ENCODE measurements at regions of chr3 and their contacts with region 1.

Region 1: GRCh38 chr3:48465531-48466378 is 19.2 kb downstream of the ATRIP start:
- H3K4me3 Mint-ChIP-seq: peak overlapping the region; percentile 87
- H3K27ac Mint-ChIP-seq: peak overlapping the region; percentile 100
- H3K4me1 Mint-ChIP-seq: peaks cover 54% of the 10 kb centered on the region
- H3K27me3 Mint-ChIP-seq: no peaks in the 10 kb centered on the region

Region 2: DNA sequence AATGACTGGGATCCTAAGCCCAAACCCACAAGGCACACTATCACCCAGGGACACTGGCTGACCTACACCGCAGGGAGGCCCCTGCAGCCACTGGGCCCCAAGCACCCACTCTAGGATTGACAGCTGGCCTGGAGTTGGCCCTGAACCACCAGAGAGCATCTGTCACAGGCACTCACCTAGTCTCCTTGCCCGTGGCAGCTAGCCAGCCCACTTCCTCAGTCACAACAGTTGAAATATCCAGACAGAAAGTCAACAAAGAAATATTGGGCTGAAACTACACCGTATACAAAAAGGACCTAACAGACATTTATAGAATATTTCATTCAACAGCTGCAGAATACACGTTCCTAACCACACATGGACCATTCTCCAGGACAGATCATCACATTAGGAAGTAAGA is 127.1 kb before region 1 on chr3:
- intact Hi-C with region 1: no loop called
- H3K4me3 Mint-ChIP-seq: no peak overlapping the region
- H3K27ac Mint-ChIP-seq: no peak overlapping the region
- H3K4me1 Mint-ChIP-seq: peaks cover 25% of the 10 kb centered on the region
- H3K27me3 Mint-ChIP-seq: no peaks in the 10 kb centered on the region

Region 3: GRCh38 chr3:48439820-48440589 is 25.8 kb before region 1 on chr3 and contains the starts of genes CCDC51 and TMA7:
- intact Hi-C with region 1: no loop called
- H3K4me3 Mint-ChIP-seq: peak within 1 kb of the TSS; percentile 87
- H3K27ac Mint-ChIP-seq: peak within 1 kb of the TSS; percentile 86
- H3K4me1 Mint-ChIP-seq: peaks cover 10% of the 10 kb centered on the region
- H3K27me3 Mint-ChIP-seq: no peaks in the 10 kb centered on the region

Region 4: DNA sequence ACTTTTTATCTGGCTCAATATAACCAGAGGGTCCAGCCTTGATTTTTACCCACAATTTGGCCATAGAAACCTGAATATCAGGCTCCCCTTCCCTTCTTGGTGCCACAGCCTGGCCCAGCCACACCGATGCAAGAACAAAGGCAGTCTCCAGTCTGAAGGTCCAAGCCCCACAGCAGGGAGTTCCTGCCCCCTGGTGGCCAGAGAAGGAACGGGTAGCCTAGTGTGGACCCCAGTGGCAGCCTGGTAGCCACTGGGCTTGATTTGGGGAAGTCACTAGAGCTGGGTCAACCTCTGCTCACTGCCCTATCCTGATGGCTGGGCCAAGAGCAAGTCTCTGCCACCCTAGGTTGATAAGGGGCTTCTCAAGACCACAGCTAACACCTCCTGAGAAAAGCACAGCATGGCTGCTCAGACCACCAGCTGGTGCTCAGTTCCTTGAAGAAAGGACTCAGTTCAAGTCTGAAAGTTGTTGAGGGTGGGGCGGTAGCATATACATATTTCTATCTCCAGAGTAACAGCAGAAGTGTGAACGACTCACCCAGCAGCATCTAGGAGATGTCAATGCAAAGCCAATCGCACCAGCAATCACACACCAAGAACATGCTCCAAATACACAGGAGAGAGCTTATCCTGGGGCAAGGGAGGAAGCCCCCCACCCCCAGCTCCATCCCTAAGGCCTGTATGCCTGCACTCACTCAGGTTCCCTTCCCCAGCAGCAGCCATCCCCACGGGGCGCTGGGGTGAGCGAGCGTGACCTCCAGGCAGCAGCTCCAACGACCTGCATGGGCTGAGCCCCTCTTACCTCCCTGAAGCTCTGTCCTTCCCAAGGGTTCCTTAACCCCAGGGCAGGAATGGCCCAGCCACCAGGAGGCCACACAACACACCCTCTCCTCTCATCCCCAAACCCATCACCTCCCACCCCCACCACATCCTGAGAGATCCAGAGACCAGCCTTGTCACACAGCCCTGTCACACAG is 83.3 kb after region 1 on chr3:
- intact Hi-C with region 1: loop called (anchors 1 kb)
- H3K4me3 Mint-ChIP-seq: no peak overlapping the region
- H3K27ac Mint-ChIP-seq: peak overlapping the region; percentile 37
- H3K4me1 Mint-ChIP-seq: peaks cover 61% of the 10 kb centered on the region
- H3K27me3 Mint-ChIP-seq: no peaks in the 10 kb centered on the region

Region 5: DNA sequence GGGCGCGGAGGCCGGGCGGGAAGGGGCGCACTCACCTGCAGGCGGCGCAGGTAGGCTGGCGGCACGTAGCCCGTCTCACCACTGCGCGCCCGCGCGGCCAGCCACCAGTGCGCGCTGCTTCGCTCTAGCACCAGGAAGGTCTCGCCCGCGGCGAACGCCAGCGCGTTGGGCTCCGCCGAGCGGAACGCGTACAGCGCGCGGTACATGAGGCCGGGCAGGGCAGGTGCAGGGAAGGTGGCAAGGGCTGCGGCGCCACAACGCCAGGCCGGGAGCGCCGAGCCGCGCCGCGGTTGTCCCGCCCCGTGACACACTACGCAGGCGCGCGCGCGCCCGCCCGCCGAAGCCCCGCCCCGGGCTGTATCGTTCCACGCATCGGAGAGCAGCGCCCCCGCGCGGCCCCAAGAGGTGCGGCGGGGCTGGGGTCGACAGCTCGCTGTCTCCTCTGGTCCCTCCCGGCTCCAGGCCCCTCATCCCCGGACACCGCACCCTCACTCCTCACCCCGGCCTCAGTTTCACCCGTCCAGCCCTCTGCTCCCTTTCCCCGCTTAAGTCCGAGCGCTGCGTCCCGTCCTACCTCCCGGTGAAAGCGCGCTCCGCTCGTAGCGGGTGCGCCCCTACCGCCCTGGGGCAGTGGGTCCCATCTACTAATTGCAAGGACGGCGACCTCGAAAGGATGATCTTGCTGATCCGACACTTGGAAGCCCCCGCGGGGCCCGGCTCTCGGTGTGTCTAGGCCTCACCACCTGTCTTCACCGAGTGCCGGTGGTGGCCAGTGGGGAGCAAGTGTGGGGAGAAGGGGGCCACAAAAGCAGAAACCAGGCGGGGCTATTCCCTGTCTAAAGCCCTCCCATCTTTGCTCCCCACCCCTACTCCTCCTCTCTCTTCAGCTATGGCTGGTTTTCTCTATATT is 220.1 kb after region 1 on chr3 and contains the start of gene NCKIPSD:
- intact Hi-C with region 1: loop called (anchors 10 kb)
- H3K4me3 Mint-ChIP-seq: peak within 1 kb of the TSS; percentile 87
- H3K27ac Mint-ChIP-seq: peak within 1 kb of the TSS; percentile 86
- H3K4me1 Mint-ChIP-seq: peaks cover 39% of the 10 kb centered on the region
- H3K27me3 Mint-ChIP-seq: peaks cover 1% of the 10 kb centered on the region

Region 6: GRCh38 chr3:48739955-48740823 is 274.4 kb after region 1 on chr3:
- intact Hi-C with region 1: no loop called
- H3K4me3 Mint-ChIP-seq: no peak overlapping the region
- H3K27ac Mint-ChIP-seq: no peak overlapping the region
- H3K4me1 Mint-ChIP-seq: peaks cover 30% of the 10 kb centered on the region
- H3K27me3 Mint-ChIP-seq: no peaks in the 10 kb centered on the region

Measured in dendritic cell treated with granulocyte-macrophage colony-stimulating factor and Interleukin-4, amounts not matched to agents 40 ng/mL and 50 ng/mL, for 4 days (primary cell).